ENCODE measurements at regions of chr9 and their contacts with region 1.

Region 1: DNA sequence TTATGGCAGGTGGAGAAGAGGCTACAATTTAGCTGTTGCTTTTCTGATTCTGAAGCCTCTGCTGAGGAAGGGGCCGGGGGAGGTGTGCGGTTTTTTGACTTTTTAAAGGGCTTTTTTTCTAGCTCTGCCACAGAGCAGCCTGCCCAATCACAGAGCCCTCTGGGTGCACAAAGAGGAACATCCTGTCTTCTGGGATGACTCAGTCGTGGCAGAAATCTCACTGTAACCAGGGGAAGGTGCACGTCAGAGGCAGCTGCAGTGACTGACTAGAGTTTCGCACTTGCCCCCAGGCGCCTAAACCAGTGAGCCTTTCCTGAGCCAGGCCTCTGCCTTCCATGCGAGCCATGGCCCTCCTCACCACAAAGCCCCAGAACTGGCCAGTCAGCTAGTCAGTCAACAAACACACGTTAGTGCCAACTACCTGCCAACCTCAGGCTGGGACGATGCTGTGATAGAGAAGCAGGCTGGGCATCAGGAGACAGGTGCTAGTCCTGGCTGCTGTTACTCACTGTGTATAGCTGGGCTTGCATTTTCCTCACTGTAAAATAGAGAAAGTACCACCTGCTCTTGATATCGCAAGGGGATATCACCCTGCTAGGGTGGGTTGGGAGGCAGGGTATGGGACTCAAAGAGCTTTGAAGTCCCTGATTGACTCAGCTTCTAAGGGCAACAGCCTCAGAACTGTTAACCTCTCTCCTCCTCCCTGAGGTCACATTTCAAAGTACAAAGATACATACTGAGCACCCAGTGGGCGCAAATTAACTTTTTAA is 2.2 kb downstream of the AKNA start:
- DNase-seq: peak; percentile 74 to 97 (median 82)
- ATAC-seq: peak; percentile 78
- H3K4me3 ChIP-seq: peak overlapping the region; percentile 99
- H3K4me3 Mint-ChIP-seq: peak overlapping the region; percentile 95
- H3K27ac ChIP-seq: peak overlapping the region; percentile 71 to 97
- H3K27ac Mint-ChIP-seq: peak overlapping the region; percentile 98
- H3K4me1 ChIP-seq: peaks cover 85% of the 10 kb centered on the region
- H3K4me1 Mint-ChIP-seq: peaks cover 80% of the 10 kb centered on the region
- H3K27me3 ChIP-seq: no peaks in the 10 kb centered on the region
- H3K27me3 Mint-ChIP-seq: no peaks in the 10 kb centered on the region
- CTCF ChIP-seq: no peak

Region 2: DNA sequence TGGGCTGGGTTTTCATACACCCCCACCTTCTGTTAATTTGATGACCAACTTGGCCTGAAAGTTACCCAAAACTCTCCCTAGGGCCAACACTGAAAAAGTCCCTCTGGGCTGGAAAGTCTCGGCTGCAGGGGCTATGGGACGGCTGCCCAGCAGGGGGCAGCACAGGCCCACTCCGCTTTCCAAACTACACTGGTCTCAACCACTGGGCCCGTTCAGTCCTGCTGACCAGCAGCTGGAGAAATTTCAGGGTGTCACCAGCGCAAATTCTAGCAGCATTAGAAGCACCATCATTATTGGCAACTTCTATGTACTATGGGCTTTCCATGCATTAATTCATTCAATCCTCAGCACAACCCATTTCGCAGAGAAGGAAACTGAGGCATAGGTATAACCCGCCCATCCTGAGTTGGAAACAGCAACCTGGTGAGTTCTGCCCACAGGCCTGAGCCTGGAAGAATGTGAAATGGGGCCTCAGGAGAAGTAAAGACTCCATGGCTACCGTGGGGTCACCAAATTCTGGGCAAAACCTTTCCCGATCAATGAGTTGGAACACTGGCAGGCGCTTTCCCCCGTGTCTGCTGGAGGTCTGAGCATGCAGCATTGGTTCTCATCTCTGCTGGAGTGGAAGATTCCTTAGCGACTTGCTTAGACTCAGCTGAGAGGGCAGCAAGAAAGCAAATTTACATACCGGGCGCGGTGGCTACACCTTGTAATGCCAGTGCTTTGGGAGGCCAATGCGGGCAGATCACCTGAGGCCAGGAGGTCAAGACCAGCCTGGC is 46.3 kb before region 1 on chr9:
- CTCF ChIA-PET with region 1: interaction called, 6 read pairs
- POLR2A ChIA-PET with region 1: interaction called, 10 read pairs
- intact Hi-C with region 1: no loop called
- DNase-seq: peak; percentile 23 to 75 (median 44)
- ATAC-seq: peak; percentile 67
- H3K4me3 ChIP-seq: no peak overlapping the region
- H3K4me3 Mint-ChIP-seq: no peak overlapping the region
- H3K27ac ChIP-seq: peak overlapping the region in 1 of 2 donors; percentile 40
- H3K27ac Mint-ChIP-seq: peak overlapping the region; percentile 62
- H3K4me1 ChIP-seq: peaks cover 11% of the 10 kb centered on the region
- H3K4me1 Mint-ChIP-seq: peaks cover 16% of the 10 kb centered on the region
- H3K27me3 ChIP-seq: no peaks in the 10 kb centered on the region
- H3K27me3 Mint-ChIP-seq: no peaks in the 10 kb centered on the region
- CTCF ChIP-seq: peak; percentile 89

Region 3: DNA sequence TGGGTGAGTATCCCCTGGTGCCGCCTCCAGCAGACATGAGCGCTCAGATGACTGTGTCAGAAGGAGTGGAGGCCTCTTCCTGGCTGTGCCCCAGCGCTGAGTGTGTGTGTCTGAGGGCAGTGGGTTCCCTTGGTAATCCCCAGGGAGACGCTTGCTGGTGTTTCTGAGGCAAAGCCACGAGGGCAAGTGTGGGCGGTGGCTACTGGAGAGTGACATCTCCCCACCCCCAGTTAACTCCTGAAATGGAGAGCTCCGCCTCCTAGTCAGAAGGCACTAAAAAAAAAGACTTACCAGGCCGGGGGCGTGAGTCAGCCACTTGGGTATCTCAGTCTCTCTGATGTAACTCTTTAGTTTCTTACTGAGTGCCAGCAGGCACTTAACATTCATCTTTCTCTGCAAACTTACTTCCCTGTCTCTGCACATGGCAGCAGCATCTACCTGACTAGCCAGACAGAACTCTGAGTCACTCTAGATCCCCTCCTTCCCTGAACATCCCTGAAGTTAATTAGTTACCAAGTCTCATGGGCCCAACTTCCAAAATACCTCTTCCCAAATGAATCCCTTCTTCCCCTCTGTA is 36.6 kb before region 1 on chr9:
- CTCF ChIA-PET with region 1: interaction called, 5 read pairs
- POLR2A ChIA-PET with region 1: interaction called, 13 read pairs
- intact Hi-C with region 1: loop called (anchors 5 kb)
- DNase-seq: peak in 11 of 14 experiments; percentile 27 to 83 (median 58)
- ATAC-seq: peak; percentile 85
- H3K4me3 ChIP-seq: no peak overlapping the region
- H3K4me3 Mint-ChIP-seq: peak overlapping the region; percentile 36
- H3K27ac ChIP-seq: peak overlapping the region; percentile 61 to 66
- H3K27ac Mint-ChIP-seq: peak overlapping the region; percentile 92
- H3K4me1 ChIP-seq: peaks cover 40% of the 10 kb centered on the region
- H3K4me1 Mint-ChIP-seq: peaks cover 59% of the 10 kb centered on the region
- H3K27me3 ChIP-seq: no peaks in the 10 kb centered on the region
- H3K27me3 Mint-ChIP-seq: no peaks in the 10 kb centered on the region
- CTCF ChIP-seq: no peak

Region 4: DNA sequence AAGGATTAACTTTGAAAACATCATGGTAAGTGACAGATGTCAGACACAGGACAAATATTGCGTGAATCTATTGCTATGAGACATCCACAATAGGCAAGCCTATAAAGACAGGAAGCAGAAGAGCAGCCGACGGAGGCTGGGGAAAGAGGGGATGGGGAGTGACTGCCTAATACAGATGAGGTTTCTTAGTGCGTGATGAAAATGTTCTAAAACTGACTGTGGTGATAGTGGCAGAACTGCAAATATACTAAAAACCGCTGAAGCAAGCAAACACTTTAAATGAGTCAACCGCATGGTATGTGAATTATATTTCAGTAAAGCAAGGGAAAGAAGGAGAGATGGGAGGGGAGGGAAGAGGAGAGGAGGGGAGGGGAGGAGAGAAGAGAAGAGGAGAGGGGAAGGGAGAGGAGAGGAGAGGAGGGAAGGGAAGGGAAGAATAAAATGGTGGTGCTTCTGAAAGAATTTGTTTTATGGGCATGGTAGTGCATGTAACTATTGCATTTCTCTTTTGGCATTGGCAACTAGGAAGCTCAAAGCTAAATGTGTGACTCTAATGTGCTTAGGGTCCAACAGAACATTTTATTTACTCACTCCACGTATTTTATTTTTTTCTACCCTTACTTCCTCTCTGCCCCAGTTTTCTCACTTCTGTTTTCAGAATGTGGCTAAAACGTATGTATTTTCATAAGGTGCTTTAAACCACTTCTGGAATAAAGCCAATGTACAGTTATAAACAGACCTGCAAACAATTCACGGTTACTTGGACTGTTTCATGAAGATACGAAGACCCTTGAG is 19.1 kb before region 1 on chr9:
- CTCF ChIA-PET with region 1: interaction called, 18 read pairs
- POLR2A ChIA-PET with region 1: interaction called, 477 read pairs
- intact Hi-C with region 1: loop called in 1 of 2 experiments (anchors 1 kb)
- DNase-seq: peak in 7 of 14 experiments; percentile 29 to 77 (median 67)
- ATAC-seq: peak; percentile 81
- H3K4me3 ChIP-seq: no peak overlapping the region
- H3K4me3 Mint-ChIP-seq: peak overlapping the region; percentile 78
- H3K27ac ChIP-seq: peak overlapping the region; percentile 77 to 81
- H3K27ac Mint-ChIP-seq: peak overlapping the region; percentile 83
- H3K4me1 ChIP-seq: peaks cover 96% of the 10 kb centered on the region
- H3K4me1 Mint-ChIP-seq: peaks cover 91% of the 10 kb centered on the region
- H3K27me3 ChIP-seq: no peaks in the 10 kb centered on the region
- H3K27me3 Mint-ChIP-seq: no peaks in the 10 kb centered on the region
- CTCF ChIP-seq: no peak

Region 5: DNA sequence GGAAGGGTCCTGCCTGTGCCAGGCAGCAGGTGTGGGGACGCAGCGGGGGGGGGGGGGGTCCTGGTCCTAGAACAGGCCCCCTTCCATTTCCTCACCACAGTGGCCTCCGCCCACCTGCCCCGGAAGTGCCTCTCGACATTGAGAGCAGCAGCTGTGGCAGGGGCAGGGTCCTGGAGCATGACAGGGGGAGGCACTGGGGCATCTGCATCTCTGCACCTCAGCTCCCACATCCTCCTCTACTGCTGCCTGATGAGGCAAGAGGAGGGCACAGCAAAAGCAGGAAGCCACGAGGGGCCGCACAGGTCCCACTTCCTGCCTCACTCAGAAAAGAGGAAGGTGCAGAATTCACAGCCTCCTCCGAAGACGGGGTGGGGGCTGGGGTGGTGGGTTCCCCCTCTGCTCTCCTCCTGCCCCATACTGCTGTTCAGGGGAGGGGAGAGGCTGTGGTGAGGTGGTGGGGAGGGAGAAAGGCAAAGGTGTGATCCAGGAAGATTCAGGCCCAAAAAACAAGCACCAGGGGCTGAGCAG is 12.6 kb before region 1 on chr9:
- CTCF ChIA-PET with region 1: interaction called, 18 read pairs
- POLR2A ChIA-PET with region 1: interaction called, 477 read pairs
- intact Hi-C with region 1: loop called (anchors 1 kb)
- DNase-seq: peak; percentile 64 to 97 (median 82)
- ATAC-seq: peak; percentile 89
- H3K4me3 ChIP-seq: peak overlapping the region; percentile 39
- H3K4me3 Mint-ChIP-seq: peak overlapping the region; percentile 85
- H3K27ac ChIP-seq: peak overlapping the region; percentile 70 to 86
- H3K27ac Mint-ChIP-seq: peak overlapping the region; percentile 81
- H3K4me1 ChIP-seq: peaks cover 98% of the 10 kb centered on the region
- H3K4me1 Mint-ChIP-seq: peaks cover 87% of the 10 kb centered on the region
- H3K27me3 ChIP-seq: no peaks in the 10 kb centered on the region
- H3K27me3 Mint-ChIP-seq: no peaks in the 10 kb centered on the region
- CTCF ChIP-seq: no peak

Region 6: GRCh38 chr9:114397848-114398605 is 12.4 kb after region 1 on chr9:
- CTCF ChIA-PET with region 1: interaction called, 56 read pairs
- POLR2A ChIA-PET with region 1: interaction called, 135 read pairs
- intact Hi-C with region 1: loop called (anchors 1 kb)
- DNase-seq: peak; percentile 90 to 98 (median 96)
- ATAC-seq: peak; percentile 84
- H3K4me3 ChIP-seq: peak overlapping the region; percentile 99
- H3K4me3 Mint-ChIP-seq: peak overlapping the region; percentile 97
- H3K27ac ChIP-seq: peak overlapping the region; percentile 93 to 94
- H3K27ac Mint-ChIP-seq: peak overlapping the region; percentile 98
- H3K4me1 ChIP-seq: peaks cover 53% of the 10 kb centered on the region
- H3K4me1 Mint-ChIP-seq: peaks cover 45% of the 10 kb centered on the region
- H3K27me3 ChIP-seq: no peaks in the 10 kb centered on the region
- H3K27me3 Mint-ChIP-seq: no peaks in the 10 kb centered on the region
- CTCF ChIP-seq: no peak

Region 7: DNA sequence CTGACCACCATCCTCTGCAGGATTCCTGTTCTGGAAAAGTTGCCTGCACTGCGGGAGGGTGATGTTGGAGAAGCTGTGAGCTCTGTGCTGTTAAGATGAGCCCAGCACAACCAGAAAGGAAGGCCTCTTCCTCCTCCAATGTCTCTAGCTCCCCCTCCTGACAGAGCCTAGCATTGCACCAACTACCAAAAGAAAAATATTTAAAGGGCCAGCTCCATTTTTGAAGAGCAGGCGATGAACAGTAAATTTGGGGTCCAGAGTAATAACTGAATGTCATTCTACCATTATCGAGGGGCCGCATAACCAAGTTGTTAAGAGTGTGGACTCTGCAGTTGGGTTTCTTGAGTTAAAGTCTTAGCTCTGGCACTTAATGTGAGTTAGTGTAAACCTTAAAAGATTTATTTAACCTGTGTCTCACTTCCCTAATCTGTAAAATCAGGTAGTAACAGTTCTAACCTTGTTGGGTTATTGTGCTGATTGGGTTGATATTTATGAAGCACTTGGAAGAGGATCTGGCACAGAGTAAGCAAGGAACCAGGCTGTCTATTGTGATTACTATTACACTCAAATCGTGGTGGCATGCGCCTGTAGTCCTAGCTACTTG is 268.1 kb after region 1 on chr9:
- CTCF ChIA-PET with region 1: interaction called, 10 read pairs
- POLR2A ChIA-PET with region 1: interaction called, 6 read pairs
- intact Hi-C with region 1: no loop called
- DNase-seq: peak; percentile 59 to 89 (median 82)
- ATAC-seq: peak; percentile 99
- H3K4me3 ChIP-seq: no peak overlapping the region
- H3K4me3 Mint-ChIP-seq: no peak overlapping the region
- H3K27ac ChIP-seq: no peak overlapping the region
- H3K27ac Mint-ChIP-seq: peak overlapping the region; percentile 30
- H3K4me1 ChIP-seq: peaks cover 8% of the 10 kb centered on the region
- H3K4me1 Mint-ChIP-seq: peaks cover 21% of the 10 kb centered on the region
- H3K27me3 ChIP-seq: no peaks in the 10 kb centered on the region
- H3K27me3 Mint-ChIP-seq: no peaks in the 10 kb centered on the region
- CTCF ChIP-seq: peak; percentile 88